Naive thymus-derived CD4-positive, alpha-beta T cell (primary cell): ENCODE measurements at regions of chr11 and their contacts with region 1.

Region 1: GRCh38 chr11:102268329-102269193 is 48.7 kb upstream of the BIRC3 start:
- DNase-seq: peak; percentile 55 to 85 (median 80)
- ATAC-seq: peak; percentile 99
- H3K4me3 ChIP-seq: peak overlapping the region; percentile 59
- H3K4me3 Mint-ChIP-seq: peak overlapping the region; percentile 77 to 97 (median 82)
- H3K27ac ChIP-seq: no peak overlapping the region
- H3K27ac Mint-ChIP-seq: peak overlapping the region; percentile 6 to 88 (median 75)
- H3K4me1 ChIP-seq: peaks cover 10 to 17% of the 10 kb centered on the region in 2 donors
- H3K4me1 Mint-ChIP-seq: peaks cover 14 to 47% (median 38%) of the 10 kb centered on the region in 7 donors
- H3K27me3 ChIP-seq: no peaks in the 10 kb centered on the region
- H3K27me3 Mint-ChIP-seq: peaks cover 0 to 49% (median 6%) of the 10 kb centered on the region in 5 donors

Region 2: DNA sequence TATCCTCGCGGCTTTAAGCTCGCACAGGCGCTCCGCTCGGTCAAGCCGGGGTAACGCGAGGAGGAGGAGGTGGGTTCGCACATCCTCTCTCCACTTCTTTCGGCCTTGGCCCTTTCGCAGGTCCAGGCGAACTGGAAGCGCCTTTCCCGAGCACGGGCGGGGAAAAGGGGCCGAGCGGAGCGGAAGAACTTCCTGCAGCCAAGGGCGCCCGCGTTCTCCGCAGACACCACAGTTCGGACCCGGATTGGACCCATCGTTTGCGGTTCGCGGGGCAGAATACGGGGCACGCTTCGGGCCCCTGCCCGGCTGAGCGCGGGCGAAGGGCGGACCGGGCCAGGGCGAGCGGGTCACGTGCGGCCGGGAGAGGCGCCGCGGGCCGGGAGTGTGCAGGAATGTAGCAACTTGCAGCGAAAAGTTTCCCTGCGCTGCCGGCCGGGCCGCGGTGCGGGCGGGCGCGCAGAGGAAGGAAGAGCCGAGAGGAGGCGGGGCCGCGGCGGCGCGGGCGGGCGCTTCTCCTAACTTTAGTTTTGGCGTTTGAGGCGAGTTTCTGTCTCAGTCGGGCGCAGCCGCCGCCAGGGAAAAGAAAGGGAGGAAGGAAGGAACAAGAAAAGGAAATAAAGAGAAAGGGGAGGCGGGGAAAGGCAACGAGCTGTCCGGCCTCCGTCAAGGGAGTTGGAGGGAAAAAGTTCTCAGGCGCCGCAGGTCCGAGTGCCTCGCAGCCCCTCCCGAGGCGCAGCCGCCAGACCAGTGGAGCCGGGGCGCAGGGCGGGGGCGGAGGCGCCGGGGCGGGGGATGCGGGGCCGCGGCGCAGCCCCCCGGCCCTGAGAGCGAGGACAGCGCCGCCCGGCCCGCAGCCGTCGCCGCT is 158.4 kb before region 1 on chr11 and contains the start of gene YAP1:
- CTCF ChIA-PET with region 1: no interaction called
- POLR2A ChIA-PET with region 1: no interaction called
- intact Hi-C with region 1: loop called in 1 of 2 experiments (anchors 1 kb)
- DNase-seq: peak; percentile 26 to 70 (median 55)
- ATAC-seq: peak; percentile 85
- H3K4me3 ChIP-seq: peak within 1 kb of the TSS; percentile 69
- H3K4me3 Mint-ChIP-seq: peak within 1 kb of the TSS; percentile 88 to 98 (median 94)
- H3K27ac ChIP-seq: no peak within 1 kb of the TSS
- H3K27ac Mint-ChIP-seq: peak within 1 kb of the TSS in 3 of 9 donors; percentile 25 to 77 (median 65)
- H3K4me1 ChIP-seq: peaks cover 0 to 6% of the 10 kb centered on the region in 2 donors
- H3K4me1 Mint-ChIP-seq: peaks cover 5 to 18% (median 11%) of the 10 kb centered on the region in 7 donors
- H3K27me3 ChIP-seq: peaks cover 3% of the 10 kb centered on the region in 2 donors
- H3K27me3 Mint-ChIP-seq: peaks cover 26 to 64% (median 58%) of the 10 kb centered on the region in 5 donors
- total RNA-seq, gene YAP1: 0.15 TPM in 1 of 5 experiments, not detected in the others

Region 3: GRCh38 chr11:102279641-102280170 is 11.1 kb after region 1 on chr11:
- CTCF ChIA-PET with region 1: interaction called, 4 read pairs
- POLR2A ChIA-PET with region 1: interaction called, 3 read pairs
- intact Hi-C with region 1: loop called in 1 of 2 experiments (anchors 1 kb)
- DNase-seq: no peak
- ATAC-seq: peak; percentile 29
- H3K4me3 ChIP-seq: no peak overlapping the region
- H3K4me3 Mint-ChIP-seq: peak overlapping the region in 6 of 10 donors; percentile 24 to 59 (median 38)
- H3K27ac ChIP-seq: no peak overlapping the region
- H3K27ac Mint-ChIP-seq: peak overlapping the region in 1 of 9 donors; percentile 19
- H3K4me1 ChIP-seq: no peaks in the 10 kb centered on the region
- H3K4me1 Mint-ChIP-seq: peaks cover 0 to 7% (median 6%) of the 10 kb centered on the region in 7 donors
- H3K27me3 ChIP-seq: no peaks in the 10 kb centered on the region
- H3K27me3 Mint-ChIP-seq: peaks cover 5 to 16% (median 10%) of the 10 kb centered on the region in 5 donors

Region 4: GRCh38 chr11:102293873-102294601 is 25.5 kb after region 1 on chr11:
- CTCF ChIA-PET with region 1: interaction called, 14 read pairs
- POLR2A ChIA-PET with region 1: interaction called, 3 read pairs
- intact Hi-C with region 1: no loop called
- DNase-seq: peak in 7 of 9 donors; percentile 50 to 75 (median 66)
- ATAC-seq: peak; percentile 98
- H3K4me3 ChIP-seq: peak overlapping the region; percentile 49
- H3K4me3 Mint-ChIP-seq: peak overlapping the region; percentile 62 to 97 (median 82)
- H3K27ac ChIP-seq: peak overlapping the region; percentile 49
- H3K27ac Mint-ChIP-seq: peak overlapping the region; percentile 77 to 95 (median 91)
- H3K4me1 ChIP-seq: peaks cover 7 to 9% of the 10 kb centered on the region in 2 donors
- H3K4me1 Mint-ChIP-seq: peaks cover 10 to 44% (median 40%) of the 10 kb centered on the region in 7 donors
- H3K27me3 ChIP-seq: no peaks in the 10 kb centered on the region
- H3K27me3 Mint-ChIP-seq: no peaks in the 10 kb centered on the region

Region 5: DNA sequence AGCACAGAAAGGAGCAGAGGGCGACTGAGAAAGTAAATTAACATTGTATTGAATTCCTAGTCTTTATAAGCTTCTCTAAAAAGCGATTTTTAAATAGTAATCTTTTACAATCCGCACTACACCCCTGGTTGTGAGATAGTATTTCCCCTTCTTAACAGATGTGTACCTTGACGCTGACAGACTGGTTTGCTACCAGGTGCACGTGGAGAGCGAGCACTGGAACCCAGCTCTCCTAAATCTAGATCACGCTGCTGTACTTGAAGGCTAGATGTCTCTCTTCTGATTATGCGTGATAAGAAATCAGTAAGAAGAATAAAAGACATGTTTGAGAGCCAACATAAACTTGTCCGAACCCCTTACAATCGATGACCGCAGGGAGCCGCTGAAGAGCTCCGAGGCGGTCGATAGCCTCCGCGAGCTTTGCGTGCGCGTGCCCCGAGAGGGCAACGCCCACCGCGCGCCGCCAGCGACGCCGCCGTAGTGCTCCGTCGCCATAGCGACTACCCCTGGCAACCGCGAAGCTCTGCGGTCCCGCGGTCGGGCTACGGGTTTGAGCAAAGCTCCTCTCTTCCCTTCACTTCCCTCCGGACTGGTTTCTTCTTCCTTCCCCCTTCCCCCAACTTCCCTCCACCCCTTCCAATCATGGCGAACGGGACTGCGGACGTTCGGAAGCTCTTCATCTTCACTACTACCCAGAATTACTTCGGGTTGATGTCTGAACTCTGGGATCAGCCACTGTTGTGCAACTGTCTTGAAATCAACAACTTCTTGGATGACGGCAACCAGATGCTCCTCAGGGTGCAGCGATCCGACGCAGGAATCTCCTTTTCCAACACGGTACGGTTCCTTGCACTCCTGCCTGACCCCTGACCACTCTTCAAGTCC is 840.6 kb after region 1 on chr11 and contains the start of gene DYNC2H1:
- CTCF ChIA-PET with region 1: no interaction called
- POLR2A ChIA-PET with region 1: no interaction called
- intact Hi-C with region 1: loop called in 1 of 2 experiments (anchors 10 kb)
- DNase-seq: peak; percentile 78 to 91 (median 89)
- ATAC-seq: peak; percentile 99
- H3K4me3 ChIP-seq: peak within 1 kb of the TSS; percentile 93
- H3K4me3 Mint-ChIP-seq: peak within 1 kb of the TSS; percentile 87 to 99 (median 94)
- H3K27ac ChIP-seq: peak within 1 kb of the TSS; percentile 60
- H3K27ac Mint-ChIP-seq: peak within 1 kb of the TSS; percentile 87 to 99 (median 92)
- H3K4me1 ChIP-seq: peaks cover 4 to 6% of the 10 kb centered on the region in 2 donors
- H3K4me1 Mint-ChIP-seq: peaks cover 5 to 19% (median 13%) of the 10 kb centered on the region in 7 donors
- H3K27me3 ChIP-seq: no peaks in the 10 kb centered on the region
- H3K27me3 Mint-ChIP-seq: peaks cover 6 to 42% (median 7%) of the 10 kb centered on the region in 5 donors
- total RNA-seq, gene DYNC2H1: 1.5 to 4.2 (median 3.0) TPM